Cardiac septum (tissue), 1 donor: ENCODE measurements at regions of chr17 and their contacts with region 1.

Region 1: GRCh38 chr17:80791758-80792284 is 199.8 kb upstream of the CHMP6 start:
- DNase-seq: no peak

Region 2: DNA sequence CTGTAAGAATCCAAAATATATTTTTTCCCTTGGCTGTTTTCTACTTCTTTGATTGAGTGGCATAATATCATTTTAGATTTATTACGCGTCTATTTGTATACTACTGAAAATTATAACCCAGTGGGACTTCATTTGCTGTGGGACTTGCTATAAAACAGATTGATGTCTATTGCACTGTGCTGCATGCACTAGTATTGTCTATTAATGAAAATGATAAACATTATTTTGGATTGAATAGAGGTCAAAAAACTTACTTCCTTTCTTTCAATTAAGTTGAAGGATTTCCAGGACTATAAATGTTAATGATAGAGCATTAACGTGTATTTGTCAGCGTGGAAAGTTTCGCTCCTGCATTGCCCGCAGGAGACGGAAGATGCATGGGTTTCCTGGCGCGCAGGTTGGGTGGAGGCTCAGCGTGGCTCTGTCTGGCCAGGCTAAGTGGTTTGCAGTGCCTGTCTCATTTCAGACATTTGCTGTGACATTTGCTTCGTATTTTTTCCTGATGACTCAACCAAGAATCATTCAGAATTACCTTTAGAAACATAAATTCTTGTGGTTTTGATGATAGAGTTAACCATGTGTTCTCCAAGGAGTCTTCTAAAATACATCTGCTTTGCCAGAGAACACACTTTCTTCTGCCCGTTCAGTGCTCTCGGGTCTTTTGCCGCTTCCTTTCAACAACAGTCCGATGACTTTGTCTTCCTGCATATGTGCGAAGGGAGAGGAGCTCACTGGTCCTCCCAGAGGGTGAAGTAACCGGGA is 30.5 kb before region 1 on chr17:
- intact Hi-C with region 1: no loop called
- DNase-seq: no peak

Region 3: GRCh38 chr17:80832888-80833583 is 41.2 kb after region 1 on chr17:
- intact Hi-C with region 1: loop called (anchors 5 kb)
- DNase-seq: peak; percentile 91